ENCODE measurements at regions of chr11 and their contacts with region 1.

Region 1: GRCh38 chr11:4072668-4073285 is 21.8 kb upstream of the RRM1 start:
- DNase-seq: peak; percentile 74
- H3K4me3 Mint-ChIP-seq: no peak overlapping the region
- H3K27ac Mint-ChIP-seq: peak overlapping the region; percentile 3
- H3K4me1 Mint-ChIP-seq: peaks cover 37% of the 10 kb centered on the region
- H3K27me3 Mint-ChIP-seq: no peaks in the 10 kb centered on the region

Region 2: GRCh38 chr11:3841426-3842350 is 231.1 kb before region 1 on chr11:
- CTCF ChIA-PET with region 1: interaction called, 20 read pairs
- POLR2A ChIA-PET with region 1: no interaction called
- DNase-seq: peak; percentile 93
- H3K4me3 Mint-ChIP-seq: peak overlapping the region; percentile 94
- H3K27ac Mint-ChIP-seq: peak overlapping the region; percentile 99
- H3K4me1 Mint-ChIP-seq: peaks cover 52% of the 10 kb centered on the region
- H3K27me3 Mint-ChIP-seq: no peaks in the 10 kb centered on the region

Region 3: GRCh38 chr11:3867209-3868091 is 205.3 kb before region 1 on chr11:
- CTCF ChIA-PET with region 1: interaction called, 12 read pairs
- POLR2A ChIA-PET with region 1: no interaction called
- DNase-seq: no peak
- H3K4me3 Mint-ChIP-seq: no peak overlapping the region
- H3K27ac Mint-ChIP-seq: peak overlapping the region; percentile 68
- H3K4me1 Mint-ChIP-seq: peaks cover 82% of the 10 kb centered on the region
- H3K27me3 Mint-ChIP-seq: no peaks in the 10 kb centered on the region

Region 4: DNA sequence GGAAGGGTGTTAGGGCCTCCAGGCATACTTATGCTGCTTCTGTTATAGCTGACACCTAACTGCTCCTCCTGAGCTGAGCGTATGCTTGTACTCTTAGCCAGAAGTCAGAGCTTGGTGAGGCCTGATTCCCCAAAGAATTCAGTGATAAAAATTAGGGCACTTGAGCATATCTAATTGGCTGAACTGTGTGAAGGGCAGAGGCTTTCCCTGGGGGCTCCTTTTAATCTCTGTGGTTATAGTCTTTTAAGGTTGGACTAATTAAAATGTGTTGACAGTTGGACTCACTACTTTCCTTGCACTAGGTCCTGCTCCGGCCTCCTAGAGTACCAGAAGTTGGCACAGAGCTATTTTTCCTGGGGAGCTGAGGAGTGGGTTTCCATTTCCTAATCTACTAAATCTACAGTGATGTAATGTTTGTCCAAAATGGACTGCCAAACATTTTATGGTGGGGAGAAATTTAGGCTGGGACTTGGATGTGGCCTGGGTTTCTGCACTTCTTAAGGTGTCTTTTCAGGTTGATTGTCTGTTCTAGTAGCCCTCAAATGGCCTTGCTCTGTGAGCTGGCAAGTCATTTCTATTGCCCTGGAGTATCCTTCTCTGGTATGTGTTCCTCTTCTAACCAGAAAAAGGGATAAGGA is 198.9 kb before region 1 on chr11:
- CTCF ChIA-PET with region 1: interaction called, 12 read pairs
- POLR2A ChIA-PET with region 1: no interaction called
- DNase-seq: no peak
- H3K4me3 Mint-ChIP-seq: no peak overlapping the region
- H3K27ac Mint-ChIP-seq: peak overlapping the region; percentile 10
- H3K4me1 Mint-ChIP-seq: peaks cover 66% of the 10 kb centered on the region
- H3K27me3 Mint-ChIP-seq: no peaks in the 10 kb centered on the region

Region 5: DNA sequence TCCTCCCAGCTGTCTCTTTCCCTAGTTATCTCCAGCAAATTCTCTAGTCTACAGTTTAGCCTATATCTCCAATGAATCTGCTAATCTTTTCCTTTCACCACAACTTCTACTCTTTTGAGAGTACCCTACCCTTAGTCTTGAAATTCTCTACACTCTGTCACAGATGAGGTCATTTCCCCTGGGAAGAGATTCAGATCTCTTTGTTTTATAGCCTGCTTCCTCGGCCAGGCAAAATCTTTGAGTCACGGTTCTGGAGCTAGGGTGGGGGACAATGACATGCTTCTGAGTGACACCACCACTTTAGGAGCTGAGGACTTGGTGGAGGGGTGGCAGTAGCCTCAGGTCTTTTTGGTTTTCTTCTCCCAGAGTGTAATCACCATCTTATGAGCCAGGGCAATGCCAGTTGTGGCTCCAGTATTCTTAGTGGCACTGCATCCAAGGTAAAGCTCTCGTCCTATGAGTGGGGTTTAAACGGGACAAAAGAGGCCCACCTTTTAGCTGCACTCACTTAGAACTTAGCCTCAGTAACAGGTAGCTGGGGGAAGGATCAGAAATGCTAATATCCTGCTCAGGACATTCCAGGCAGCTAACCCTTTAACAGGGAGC is 76.7 kb before region 1 on chr11:
- CTCF ChIA-PET with region 1: no interaction called
- POLR2A ChIA-PET with region 1: no interaction called
- DNase-seq: no peak
- H3K4me3 Mint-ChIP-seq: no peak overlapping the region
- H3K27ac Mint-ChIP-seq: no peak overlapping the region
- H3K4me1 Mint-ChIP-seq: peaks cover 39% of the 10 kb centered on the region
- H3K27me3 Mint-ChIP-seq: no peaks in the 10 kb centered on the region

Region 6: GRCh38 chr11:4087551-4087950 is 14.8 kb after region 1 on chr11:
- CTCF ChIA-PET with region 1: interaction called, 22 read pairs
- POLR2A ChIA-PET with region 1: no interaction called
- DNase-seq: no peak
- H3K4me3 Mint-ChIP-seq: no peak overlapping the region
- H3K27ac Mint-ChIP-seq: peak overlapping the region; percentile 69
- H3K4me1 Mint-ChIP-seq: peaks cover 67% of the 10 kb centered on the region
- H3K27me3 Mint-ChIP-seq: no peaks in the 10 kb centered on the region

Region 7: DNA sequence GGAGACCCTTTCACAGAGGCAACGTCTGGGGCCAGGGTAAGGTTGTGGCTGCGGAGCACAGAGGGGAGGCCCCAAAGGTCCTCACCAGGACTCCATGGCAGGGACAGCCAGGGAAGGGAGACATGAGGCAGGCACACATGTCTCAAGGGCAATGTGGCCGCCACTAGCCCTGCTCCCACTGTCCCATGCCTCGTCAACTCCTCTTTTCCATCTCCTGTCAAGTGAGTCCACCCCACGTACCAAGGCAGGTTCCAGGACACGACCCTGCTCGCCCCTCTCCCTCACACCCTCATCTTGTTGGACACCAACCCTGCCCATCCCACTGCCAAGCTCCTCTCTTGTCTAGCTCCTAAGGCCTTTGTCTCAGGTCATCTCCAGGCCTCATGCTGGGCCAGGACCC is 95.0 kb after region 1 on chr11:
- CTCF ChIA-PET with region 1: no interaction called
- POLR2A ChIA-PET with region 1: no interaction called
- DNase-seq: no peak
- H3K4me3 Mint-ChIP-seq: no peak overlapping the region
- H3K27ac Mint-ChIP-seq: no peak overlapping the region
- H3K4me1 Mint-ChIP-seq: no peaks in the 10 kb centered on the region
- H3K27me3 Mint-ChIP-seq: peaks cover 4% of the 10 kb centered on the region

Measured in activated CD4-positive, alpha-beta T cell treated with anti-CD3 and anti-CD28 coated beads, Interleukin-2, amount 10 ng/mL, durations not matched to agents 7 days and 5 days (primary cell).